ENCODE measurements at regions of chr3 and their contacts with region 1.

Region 1: GRCh38 chr3:43286115-43286840 is at the start of gene SNRK:
- DNase-seq: peak; percentile 84 to 99 (median 94)
- ATAC-seq: peak; percentile 93
- H3K4me3 ChIP-seq: peak within 1 kb of the TSS; percentile 79
- H3K4me3 Mint-ChIP-seq: peak within 1 kb of the TSS; percentile 97 to 100 (median 99)
- H3K27ac ChIP-seq: peak within 1 kb of the TSS; percentile 99
- H3K27ac Mint-ChIP-seq: peak within 1 kb of the TSS; percentile 93 to 100 (median 99)
- H3K4me1 ChIP-seq: peaks cover 28% of the 10 kb centered on the region in 2 donors
- H3K4me1 Mint-ChIP-seq: peaks cover 27 to 34% (median 33%) of the 10 kb centered on the region in 7 donors
- H3K27me3 ChIP-seq: no peaks in the 10 kb centered on the region
- H3K27me3 Mint-ChIP-seq: peaks cover 0 to 16% (median 0%) of the 10 kb centered on the region in 5 donors
- total RNA-seq, gene SNRK: 71.9 to 176 (median 146) TPM

Region 2: GRCh38 chr3:42600111-42600988 is 685.9 kb before region 1 on chr3 and contains the start of gene NKTR:
- CTCF ChIA-PET with region 1: no interaction called
- POLR2A ChIA-PET with region 1: no interaction called
- intact Hi-C with region 1: loop called in 1 of 2 experiments (anchors 5 kb)
- DNase-seq: peak; percentile 98 to 100 (median 100)
- ATAC-seq: peak; percentile 97
- H3K4me3 ChIP-seq: peak within 1 kb of the TSS; percentile 75
- H3K4me3 Mint-ChIP-seq: peak within 1 kb of the TSS; percentile 91 to 98 (median 95)
- H3K27ac ChIP-seq: peak within 1 kb of the TSS; percentile 93
- H3K27ac Mint-ChIP-seq: peak within 1 kb of the TSS; percentile 95 to 99 (median 98)
- H3K4me1 ChIP-seq: peaks cover 11 to 25% of the 10 kb centered on the region in 2 donors
- H3K4me1 Mint-ChIP-seq: peaks cover 26 to 53% (median 43%) of the 10 kb centered on the region in 7 donors
- H3K27me3 ChIP-seq: no peaks in the 10 kb centered on the region
- H3K27me3 Mint-ChIP-seq: peaks cover 0 to 2% (median 0%) of the 10 kb centered on the region in 5 donors
- total RNA-seq, gene NKTR: 110 to 275 (median 238) TPM

Region 3: DNA sequence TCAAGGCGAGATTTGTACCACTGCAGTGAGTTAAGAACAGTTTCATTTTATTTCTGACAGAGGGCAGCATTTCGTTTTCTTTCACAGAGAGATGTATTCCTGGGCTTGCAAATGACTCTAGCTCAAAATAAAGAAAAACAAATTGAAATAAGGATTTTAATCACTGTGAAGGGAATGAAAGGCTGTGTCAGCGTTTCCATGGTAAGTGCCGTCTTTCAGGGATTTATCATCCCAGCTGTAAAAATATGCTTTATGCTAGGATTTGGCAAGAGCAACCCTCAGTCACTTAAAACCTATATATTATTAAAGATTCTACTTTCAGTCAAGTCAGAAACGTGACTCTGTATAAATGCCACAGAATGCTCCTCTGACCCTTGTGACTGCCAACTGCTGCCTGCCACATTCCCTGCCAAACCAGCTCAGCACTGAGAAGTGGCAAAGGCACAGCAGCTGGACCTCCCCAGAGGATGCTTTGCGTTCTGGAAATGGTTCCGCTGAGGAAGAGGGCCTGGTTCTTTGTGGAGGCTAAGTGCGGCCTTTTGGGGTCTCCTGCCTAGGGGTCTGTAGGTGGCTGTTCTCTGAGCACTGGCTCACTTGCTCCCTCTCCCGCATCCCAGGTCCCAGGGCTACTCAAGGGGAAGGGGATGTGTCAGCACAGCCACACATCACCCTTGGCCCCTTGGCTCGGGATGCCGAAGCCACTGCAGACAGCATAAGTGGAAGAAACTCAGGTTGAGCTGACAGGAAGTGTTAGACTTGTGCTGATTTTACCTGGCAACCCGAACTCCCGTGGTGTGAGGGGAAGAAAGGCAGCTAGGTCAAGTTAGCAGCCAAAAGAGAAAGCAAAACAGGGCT is 123.8 kb before region 1 on chr3:
- CTCF ChIA-PET with region 1: interaction called, 9 read pairs
- POLR2A ChIA-PET with region 1: interaction called, 32 read pairs
- intact Hi-C with region 1: loop called (anchors 1 kb)
- DNase-seq: peak in 8 of 9 donors; percentile 35 to 82 (median 76)
- ATAC-seq: peak; percentile 85
- H3K4me3 ChIP-seq: peak overlapping the region; percentile 19
- H3K4me3 Mint-ChIP-seq: peak overlapping the region; percentile 68 to 91 (median 82)
- H3K27ac ChIP-seq: peak overlapping the region; percentile 74
- H3K27ac Mint-ChIP-seq: peak overlapping the region; percentile 83 to 100 (median 98)
- H3K4me1 ChIP-seq: peaks cover 22 to 26% of the 10 kb centered on the region in 2 donors
- H3K4me1 Mint-ChIP-seq: peaks cover 16 to 37% (median 30%) of the 10 kb centered on the region in 7 donors
- H3K27me3 ChIP-seq: no peaks in the 10 kb centered on the region
- H3K27me3 Mint-ChIP-seq: peaks cover 0 to 2% (median 0%) of the 10 kb centered on the region in 5 donors

Region 4: GRCh38 chr3:43296565-43296964 is 10.3 kb after region 1 on chr3:
- CTCF ChIA-PET with region 1: interaction called, 11 read pairs
- POLR2A ChIA-PET with region 1: interaction called, 66 read pairs
- intact Hi-C with region 1: loop called (anchors 1 kb)
- DNase-seq: peak in 8 of 9 donors; percentile 51 to 93 (median 86)
- ATAC-seq: peak; percentile 95
- H3K4me3 ChIP-seq: peak overlapping the region; percentile 53
- H3K4me3 Mint-ChIP-seq: peak overlapping the region; percentile 81 to 99 (median 87)
- H3K27ac ChIP-seq: peak overlapping the region; percentile 89
- H3K27ac Mint-ChIP-seq: peak overlapping the region; percentile 92 to 99 (median 96)
- H3K4me1 ChIP-seq: peaks cover 76 to 78% of the 10 kb centered on the region in 2 donors
- H3K4me1 Mint-ChIP-seq: peaks cover 46 to 97% (median 83%) of the 10 kb centered on the region in 7 donors
- H3K27me3 ChIP-seq: no peaks in the 10 kb centered on the region
- H3K27me3 Mint-ChIP-seq: no peaks in the 10 kb centered on the region

Region 5: GRCh38 chr3:43345877-43346276 is 59.6 kb after region 1 on chr3:
- CTCF ChIA-PET with region 1: interaction called, 3 read pairs
- POLR2A ChIA-PET with region 1: interaction called, 14 read pairs
- intact Hi-C with region 1: loop called (anchors 1 kb)
- DNase-seq: no peak
- ATAC-seq: no peak
- H3K4me3 ChIP-seq: no peak overlapping the region
- H3K4me3 Mint-ChIP-seq: peak overlapping the region in 9 of 10 donors; percentile 18 to 73 (median 64)
- H3K27ac ChIP-seq: peak overlapping the region; percentile 48
- H3K27ac Mint-ChIP-seq: peak overlapping the region; percentile 88 to 96 (median 92)
- H3K4me1 ChIP-seq: peaks cover 68 to 83% of the 10 kb centered on the region in 2 donors
- H3K4me1 Mint-ChIP-seq: peaks cover 41 to 85% (median 74%) of the 10 kb centered on the region in 7 donors
- H3K27me3 ChIP-seq: no peaks in the 10 kb centered on the region
- H3K27me3 Mint-ChIP-seq: no peaks in the 10 kb centered on the region

Region 6: DNA sequence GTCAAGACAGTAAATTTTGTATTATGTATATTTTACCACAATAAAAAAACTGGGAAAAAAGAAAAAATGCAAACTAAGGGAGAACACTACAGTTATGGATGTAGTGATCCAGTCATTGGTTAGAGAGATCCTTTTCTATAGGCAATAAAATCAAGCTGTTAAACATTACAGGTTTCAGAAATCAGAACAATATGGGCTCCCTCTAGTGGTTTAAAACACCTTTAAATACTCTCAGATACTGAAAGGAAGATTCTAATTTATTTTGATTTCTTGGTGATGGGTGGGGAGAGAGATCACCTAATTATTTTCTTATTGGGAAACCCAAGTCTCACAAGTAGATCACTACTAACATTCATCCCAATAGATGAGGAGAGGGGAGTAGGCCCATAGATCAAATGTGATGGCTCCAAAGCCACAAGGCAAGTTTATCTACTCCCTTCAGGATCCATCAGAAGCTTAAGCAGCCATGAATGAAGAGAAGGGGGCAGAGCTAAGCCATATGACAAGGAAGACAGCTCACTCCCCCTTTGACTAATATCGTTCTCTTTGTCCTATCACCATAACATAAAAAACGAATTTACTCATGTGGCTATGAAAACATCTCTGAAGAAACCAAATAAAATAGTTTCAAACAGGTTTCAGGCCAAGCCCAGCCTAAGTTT is 216.9 kb after region 1 on chr3:
- CTCF ChIA-PET with region 1: interaction called, 6 read pairs
- POLR2A ChIA-PET with region 1: interaction called, 11 read pairs
- intact Hi-C with region 1: loop called (anchors 1 to 5 kb)
- DNase-seq: peak in 6 of 9 donors; percentile 39 to 68 (median 59)
- ATAC-seq: peak; percentile 68
- H3K4me3 ChIP-seq: no peak overlapping the region
- H3K4me3 Mint-ChIP-seq: no peak overlapping the region
- H3K27ac ChIP-seq: no peak overlapping the region
- H3K27ac Mint-ChIP-seq: peak overlapping the region in 4 of 9 donors; percentile 2 to 49 (median 24)
- H3K4me1 ChIP-seq: peaks cover 17 to 18% of the 10 kb centered on the region in 2 donors
- H3K4me1 Mint-ChIP-seq: peaks cover 18 to 51% (median 48%) of the 10 kb centered on the region in 7 donors
- H3K27me3 ChIP-seq: no peaks in the 10 kb centered on the region
- H3K27me3 Mint-ChIP-seq: peaks cover 0 to 8% (median 0%) of the 10 kb centered on the region in 5 donors